ENCODE measurements at regions of chr14 and their contacts with region 1.

Region 1: GRCh38 chr14:65164068-65164824 is 61.9 kb upstream of the MAX start:
- DNase-seq: no peak
- H3K4me3 ChIP-seq: no peak overlapping the region
- H3K27ac ChIP-seq: no peak overlapping the region
- H3K4me1 ChIP-seq: peaks cover 0 to 3% (median 0%) of the 10 kb centered on the region in 3 donors
- H3K27me3 ChIP-seq: no peaks in the 10 kb centered on the region
- CTCF ChIP-seq: peak; percentile 47 to 69 (median 56)
- POLR2A ChIP-seq: no peak

Region 2: DNA sequence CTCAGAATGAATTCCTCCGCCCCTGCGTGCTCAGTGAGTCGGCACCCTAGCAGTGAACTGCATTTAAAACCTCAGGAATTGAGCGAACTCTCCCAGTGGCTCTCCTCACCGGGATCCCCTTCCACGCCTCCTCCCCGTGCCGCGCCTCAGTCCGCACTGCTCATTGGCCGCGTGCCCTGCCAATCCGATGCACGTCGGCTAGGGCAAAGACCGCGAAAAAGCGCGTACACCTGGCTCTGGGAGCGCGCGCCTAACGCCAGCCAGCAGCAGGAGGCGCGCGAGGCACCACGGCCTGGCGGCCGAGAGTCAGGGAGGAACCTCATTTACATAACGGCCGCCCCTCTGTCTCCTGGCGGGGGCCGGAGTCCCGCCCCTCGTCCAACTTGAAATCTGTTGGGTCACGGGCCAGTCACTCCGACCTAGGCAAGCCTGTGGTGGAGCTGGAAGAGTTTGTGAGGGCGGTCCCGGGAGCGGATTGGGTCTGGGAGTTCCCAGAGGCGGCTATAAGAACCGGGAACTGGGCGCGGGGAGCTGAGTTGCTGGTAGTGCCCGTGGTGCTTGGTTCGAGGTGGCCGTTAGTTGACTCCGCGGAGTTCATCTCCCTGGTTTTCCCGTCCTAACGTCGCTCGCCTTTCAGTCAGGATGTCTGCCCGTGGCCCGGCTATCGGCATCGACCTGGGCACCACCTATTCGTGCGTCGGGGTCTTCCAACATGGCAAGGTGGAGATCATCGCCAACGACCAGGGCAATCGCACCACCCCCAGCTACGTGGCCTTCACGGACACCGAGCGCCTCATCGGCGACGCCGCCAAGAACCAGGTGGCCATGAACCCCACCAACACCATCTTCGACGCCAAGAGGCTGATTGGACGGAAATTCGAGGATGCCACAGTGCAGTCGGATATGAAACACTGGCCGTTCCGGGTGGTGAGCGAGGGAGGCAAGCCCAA is 623.8 kb before region 1 on chr14 and contains the start of gene HSPA2:
- intact Hi-C with region 1: no loop called
- DNase-seq: peak; percentile 92
- H3K4me3 ChIP-seq: peak within 1 kb of the TSS; percentile 38 to 77 (median 66)
- H3K27ac ChIP-seq: peak within 1 kb of the TSS; percentile 87 to 96 (median 96)
- H3K4me1 ChIP-seq: peaks cover 0 to 54% (median 5%) of the 10 kb centered on the region in 3 donors
- H3K27me3 ChIP-seq: no peaks in the 10 kb centered on the region
- CTCF ChIP-seq: peak; percentile 69 to 97 (median 90)
- POLR2A ChIP-seq: peak in 3 of 4 donors; percentile 73 to 98 (median 93)
- total RNA-seq, gene HSPA2: 18.9 to 130 (median 74.5) TPM

Region 3: DNA sequence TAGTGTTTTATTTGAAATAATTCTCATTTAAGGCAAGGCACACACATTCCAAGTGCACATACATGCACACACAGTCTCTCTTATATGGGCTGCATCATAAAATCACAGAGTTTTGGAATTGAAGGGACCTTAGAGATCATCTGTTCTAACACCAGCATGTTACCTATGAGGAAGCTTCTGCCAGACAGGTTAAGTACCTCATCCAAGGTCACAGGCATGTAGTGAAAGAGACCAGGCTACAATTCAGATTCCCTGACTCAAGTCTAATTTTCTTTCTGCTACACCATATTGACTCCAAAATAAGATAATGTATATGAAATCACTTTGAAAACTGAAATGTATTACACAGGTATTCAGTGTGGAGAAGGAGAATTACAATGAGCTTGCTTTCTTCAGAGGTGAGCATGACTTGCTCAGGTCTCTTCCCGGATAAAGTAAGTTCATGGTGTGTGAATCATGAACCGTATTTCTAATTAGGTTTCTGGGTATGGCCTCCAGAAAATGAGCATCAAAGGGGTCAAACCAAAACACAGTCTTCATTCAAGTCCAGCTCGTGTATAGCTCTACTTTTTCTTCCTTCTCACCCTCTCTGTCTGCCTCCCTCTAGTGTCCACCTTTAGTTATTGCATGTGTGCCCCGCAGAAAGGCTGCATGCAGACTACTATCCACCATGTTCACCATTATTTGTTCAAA is 660.2 kb after region 1 on chr14:
- intact Hi-C with region 1: loop called (anchors 10 kb)
- DNase-seq: no peak
- H3K4me3 ChIP-seq: no peak overlapping the region
- H3K27ac ChIP-seq: no peak overlapping the region
- H3K4me1 ChIP-seq: no peaks in the 10 kb centered on the region
- H3K27me3 ChIP-seq: peaks cover 0 to 52% (median 0%) of the 10 kb centered on the region in 4 donors
- CTCF ChIP-seq: peak; percentile 85 to 95 (median 89)
- POLR2A ChIP-seq: no peak

Region 4: DNA sequence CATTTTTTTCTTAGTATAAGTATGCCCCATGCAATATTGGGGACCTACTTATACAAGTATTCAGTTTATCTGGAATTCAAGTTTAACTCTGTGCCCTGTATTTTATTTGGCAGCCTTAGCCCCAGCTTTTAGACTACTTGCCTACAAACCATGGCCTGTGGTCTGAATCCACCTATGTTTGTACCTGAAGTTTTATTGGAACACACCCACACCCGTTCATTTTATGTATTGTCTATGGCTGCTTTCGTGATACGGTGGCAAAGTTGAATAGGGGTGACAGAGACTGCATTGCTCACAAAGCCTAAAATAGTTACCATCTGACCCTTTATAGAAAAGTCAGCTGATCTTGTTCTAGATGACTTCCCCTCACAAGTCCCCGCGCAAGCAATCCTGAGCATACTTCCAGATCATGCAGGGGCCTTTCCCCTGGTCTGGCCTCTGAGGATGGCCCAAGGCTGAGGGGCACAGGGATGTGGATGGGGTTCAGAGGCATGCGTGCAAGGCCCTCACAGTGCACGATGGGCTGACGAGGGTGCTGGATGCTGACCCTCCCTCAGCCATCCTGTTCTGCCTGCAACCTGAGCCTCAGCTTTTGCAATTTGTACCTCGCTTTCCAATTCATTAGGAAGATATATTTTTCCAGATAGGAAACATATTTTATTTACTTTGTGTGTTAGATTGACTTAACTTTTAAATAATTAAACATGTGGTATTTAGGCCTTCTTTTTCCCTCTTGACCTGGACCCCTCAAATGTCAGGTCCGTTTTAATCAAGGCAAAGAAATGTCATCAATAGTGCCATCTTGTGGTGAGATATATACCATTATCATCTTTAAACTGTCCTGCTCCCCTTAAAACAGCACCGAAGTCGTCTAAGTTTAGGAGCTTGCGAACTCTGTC is 794.7 kb after region 1 on chr14:
- intact Hi-C with region 1: loop called (anchors 10 kb)
- DNase-seq: no peak
- H3K4me3 ChIP-seq: no peak overlapping the region
- H3K27ac ChIP-seq: no peak overlapping the region
- H3K4me1 ChIP-seq: no peaks in the 10 kb centered on the region
- H3K27me3 ChIP-seq: peaks cover 0 to 13% (median 0%) of the 10 kb centered on the region in 4 donors
- CTCF ChIP-seq: peak in 5 of 6 experiments; percentile 22 to 50 (median 40)
- POLR2A ChIP-seq: no peak